Calu3 (cell line): ENCODE measurements at regions of chr1 and their contacts with region 1.

Region 1: GRCh38 chr1:225875044-225875814 is 7.0 kb downstream of the TMEM63A start:
- DNase-seq: peak; percentile 88
- H3K4me3 Mint-ChIP-seq: peak overlapping the region; percentile 67
- H3K27ac Mint-ChIP-seq: peak overlapping the region; percentile 68
- H3K4me1 Mint-ChIP-seq: peaks cover 78% of the 10 kb centered on the region
- H3K27me3 Mint-ChIP-seq: no peaks in the 10 kb centered on the region
- CTCF ChIP-seq: no peak

Region 2: GRCh38 chr1:225977937-225978748 is 102.9 kb after region 1 on chr1:
- CTCF ChIA-PET with region 1: no interaction called
- intact Hi-C with region 1: loop called (anchors 5 kb)
- DNase-seq: no peak
- H3K4me3 Mint-ChIP-seq: no peak overlapping the region
- H3K27ac Mint-ChIP-seq: no peak overlapping the region
- H3K4me1 Mint-ChIP-seq: no peaks in the 10 kb centered on the region
- H3K27me3 Mint-ChIP-seq: no peaks in the 10 kb centered on the region
- CTCF ChIP-seq: no peak

Region 3: GRCh38 chr1:226195144-226195543 is 319.9 kb after region 1 on chr1:
- CTCF ChIA-PET with region 1: no interaction called
- intact Hi-C with region 1: no loop called
- DNase-seq: no peak
- H3K4me3 Mint-ChIP-seq: no peak overlapping the region
- H3K27ac Mint-ChIP-seq: no peak overlapping the region
- H3K4me1 Mint-ChIP-seq: peaks cover 9% of the 10 kb centered on the region
- H3K27me3 Mint-ChIP-seq: no peaks in the 10 kb centered on the region
- CTCF ChIP-seq: no peak

Region 4: GRCh38 chr1:226403201-226404034 is 528.2 kb after region 1 on chr1:
- CTCF ChIA-PET with region 1: no interaction called
- intact Hi-C with region 1: no loop called
- DNase-seq: peak; percentile 33
- H3K4me3 Mint-ChIP-seq: no peak overlapping the region
- H3K27ac Mint-ChIP-seq: peak overlapping the region; percentile 16
- H3K4me1 Mint-ChIP-seq: peaks cover 29% of the 10 kb centered on the region
- H3K27me3 Mint-ChIP-seq: no peaks in the 10 kb centered on the region
- CTCF ChIP-seq: peak; percentile 24